ENCODE measurements at regions of chr22 and their contacts with region 1.

Region 1: DNA sequence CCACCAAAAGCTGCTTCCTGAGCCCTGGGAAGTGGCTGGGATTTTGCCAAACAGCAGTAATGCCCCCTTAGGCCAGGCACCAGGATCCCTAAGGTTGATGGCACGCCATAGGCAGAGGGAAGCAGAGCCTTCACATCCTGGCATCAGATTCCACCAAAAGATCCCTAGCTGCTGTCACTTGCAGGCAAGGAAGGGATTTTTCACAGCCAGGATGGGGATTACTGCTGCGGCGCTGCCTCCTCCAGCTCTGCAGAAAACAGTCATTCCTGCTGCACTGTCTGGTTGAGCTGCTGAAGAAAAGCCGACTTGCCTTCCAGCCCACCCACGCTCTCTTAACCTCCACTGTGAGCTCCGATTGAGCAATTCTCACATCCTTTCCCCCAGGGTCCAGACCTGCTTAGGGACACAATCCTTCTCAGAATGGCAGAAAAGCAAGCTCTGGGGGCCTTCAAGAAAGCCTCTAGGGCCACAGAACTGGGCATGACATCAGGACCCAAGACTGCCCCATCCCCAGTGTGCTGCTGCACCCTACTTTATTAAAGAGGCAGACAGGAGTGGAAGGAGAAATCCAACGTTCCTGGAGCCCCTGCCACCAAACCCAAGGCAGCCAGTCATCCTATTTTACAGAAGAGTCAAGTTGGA is 19.9 kb downstream of the SYN3 start:
- DNase-seq: no peak
- H3K4me3 ChIP-seq: no peak overlapping the region
- H3K27ac ChIP-seq: no peak overlapping the region
- H3K27me3 ChIP-seq: peaks cover 3% of the 10 kb centered on the region
- CTCF ChIP-seq: no peak

Region 2: DNA sequence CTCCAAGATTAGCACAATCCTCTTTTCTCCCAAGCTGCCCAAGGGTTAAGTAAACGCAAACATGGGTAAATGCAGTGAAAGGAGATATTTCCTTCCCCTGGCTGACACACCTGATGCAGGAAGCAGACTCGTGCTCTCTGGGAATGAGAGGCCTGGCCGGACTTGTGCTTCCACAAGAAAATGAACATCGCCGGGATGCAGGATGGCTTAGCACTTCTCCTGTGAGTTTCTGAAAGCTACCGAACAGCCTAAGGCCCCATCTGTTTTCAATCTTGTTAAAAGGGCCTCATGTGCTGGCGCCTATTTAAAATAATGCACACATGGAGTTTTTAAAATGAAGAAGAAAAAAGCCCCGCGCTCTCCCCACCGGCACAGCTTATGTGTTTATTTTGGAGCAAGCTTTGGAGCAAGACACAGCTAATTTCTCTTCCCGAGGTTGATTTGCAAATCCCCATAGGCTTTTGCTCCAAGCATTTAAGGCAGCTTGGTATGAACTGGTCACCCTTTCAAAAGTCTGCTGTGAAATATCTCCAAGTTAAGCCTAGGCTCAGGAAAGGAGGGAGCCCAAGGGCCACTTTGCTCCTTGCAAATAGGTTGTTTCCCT is 81.0 kb before region 1 on chr22:
- CTCF ChIA-PET with region 1: no interaction called
- POLR2A ChIA-PET with region 1: no interaction called
- DNase-seq: no peak
- H3K4me3 ChIP-seq: no peak overlapping the region
- H3K27ac ChIP-seq: no peak overlapping the region
- H3K27me3 ChIP-seq: peaks cover 11% of the 10 kb centered on the region
- CTCF ChIP-seq: no peak

Region 3: GRCh38 chr22:33024626-33025025 is 13.6 kb before region 1 on chr22:
- CTCF ChIA-PET with region 1: no interaction called
- POLR2A ChIA-PET with region 1: no interaction called
- DNase-seq: no peak
- H3K4me3 ChIP-seq: no peak overlapping the region
- H3K27ac ChIP-seq: no peak overlapping the region
- H3K27me3 ChIP-seq: peaks cover 2% of the 10 kb centered on the region
- CTCF ChIP-seq: no peak

Region 4: GRCh38 chr22:33049119-33049729 is 11.0 kb after region 1 on chr22:
- CTCF ChIA-PET with region 1: interaction called, 18 read pairs
- POLR2A ChIA-PET with region 1: no interaction called
- DNase-seq: peak; percentile 11
- H3K4me3 ChIP-seq: no peak overlapping the region
- H3K27ac ChIP-seq: no peak overlapping the region
- H3K27me3 ChIP-seq: peaks cover 7% of the 10 kb centered on the region
- CTCF ChIP-seq: peak; percentile 97

Measured in AG04450 (cell line).